B cell (primary cell): ENCODE measurements at regions of chr4 and their contacts with region 1.

Region 1: GRCh38 chr4:140790765-140791164 is 34.6 kb upstream of the TBC1D9 start:
- DNase-seq: peak; percentile 93
- ATAC-seq: peak; percentile 92
- H3K4me3 ChIP-seq: peak overlapping the region in 1 of 5 experiments; percentile 31
- H3K4me3 Mint-ChIP-seq: peak overlapping the region; percentile 67
- H3K27ac ChIP-seq: peak overlapping the region; percentile 72 to 82
- H3K27ac Mint-ChIP-seq: peak overlapping the region; percentile 88
- H3K4me1 ChIP-seq: peaks cover 63 to 67% of the 10 kb centered on the region in 2 donors
- H3K4me1 Mint-ChIP-seq: peaks cover 69% of the 10 kb centered on the region
- H3K27me3 ChIP-seq: no peaks in the 10 kb centered on the region
- H3K27me3 Mint-ChIP-seq: no peaks in the 10 kb centered on the region
- CTCF ChIP-seq: no peak

Region 2: DNA sequence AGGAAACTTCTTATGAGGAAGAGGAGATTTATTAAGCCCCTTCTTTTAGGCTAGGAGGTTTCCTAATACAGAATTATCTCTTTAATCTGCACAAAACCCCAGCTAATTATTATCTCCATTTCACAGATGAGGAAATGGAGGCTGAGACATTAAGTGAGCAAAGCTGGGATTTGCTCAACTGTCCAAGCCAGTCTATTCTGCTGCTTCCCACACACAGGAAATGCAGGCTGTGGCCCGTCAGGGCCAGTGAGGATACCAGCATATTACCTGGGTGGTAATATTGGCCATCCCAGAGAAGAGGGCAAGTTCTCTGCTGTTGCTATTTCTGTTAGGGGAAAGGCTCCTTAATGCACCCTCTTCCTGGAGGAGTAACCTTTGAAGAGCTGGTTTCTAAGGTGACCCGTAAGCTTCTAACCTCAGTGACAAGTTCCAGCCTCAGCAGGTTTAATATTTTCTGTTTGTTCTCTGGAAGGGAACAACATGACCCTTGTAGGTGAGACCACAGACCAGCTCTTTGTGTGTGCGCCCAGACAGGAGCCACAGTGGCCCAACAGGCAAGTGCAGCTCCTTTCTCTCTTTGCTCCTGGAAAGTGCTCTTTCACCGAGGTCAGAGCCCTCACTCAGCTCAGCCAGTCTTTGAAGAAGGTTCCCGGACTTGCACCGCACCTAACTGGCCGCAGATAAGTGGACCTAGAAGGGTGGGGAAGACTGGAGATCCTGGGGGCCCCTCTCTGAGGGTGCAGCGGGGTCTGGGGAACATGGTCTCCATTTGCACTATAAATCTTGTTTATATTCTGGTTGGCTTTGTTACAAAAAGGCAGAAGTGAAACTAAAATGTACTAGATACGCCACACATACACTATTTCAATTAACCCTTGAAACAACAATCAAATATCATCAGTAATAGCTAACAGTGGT is 70.1 kb before region 1 on chr4:
- CTCF ChIA-PET with region 1: interaction called, 4 read pairs
- POLR2A ChIA-PET with region 1: interaction called, 8 read pairs
- intact Hi-C with region 1: loop called (anchors 5 kb)
- DNase-seq: peak; percentile 75
- ATAC-seq: peak; percentile 63
- H3K4me3 ChIP-seq: peak overlapping the region; percentile 40 to 68 (median 54)
- H3K4me3 Mint-ChIP-seq: peak overlapping the region; percentile 89
- H3K27ac ChIP-seq: peak overlapping the region; percentile 92
- H3K27ac Mint-ChIP-seq: peak overlapping the region; percentile 99
- H3K4me1 ChIP-seq: peaks cover 75 to 76% of the 10 kb centered on the region in 2 donors
- H3K4me1 Mint-ChIP-seq: peaks cover 85% of the 10 kb centered on the region
- H3K27me3 ChIP-seq: no peaks in the 10 kb centered on the region
- H3K27me3 Mint-ChIP-seq: no peaks in the 10 kb centered on the region
- CTCF ChIP-seq: no peak

Region 3: GRCh38 chr4:140774510-140774909 is 16.3 kb before region 1 on chr4:
- CTCF ChIA-PET with region 1: interaction called, 3 read pairs
- POLR2A ChIA-PET with region 1: no interaction called
- intact Hi-C with region 1: loop called (anchors 2 kb)
- DNase-seq: no peak
- ATAC-seq: peak; percentile 28
- H3K4me3 ChIP-seq: no peak overlapping the region
- H3K4me3 Mint-ChIP-seq: peak overlapping the region; percentile 8
- H3K27ac ChIP-seq: peak overlapping the region in 1 of 2 donors; percentile 35
- H3K27ac Mint-ChIP-seq: peak overlapping the region; percentile 34
- H3K4me1 ChIP-seq: peaks cover 16 to 17% of the 10 kb centered on the region in 2 donors
- H3K4me1 Mint-ChIP-seq: peaks cover 40% of the 10 kb centered on the region
- H3K27me3 ChIP-seq: no peaks in the 10 kb centered on the region
- H3K27me3 Mint-ChIP-seq: no peaks in the 10 kb centered on the region
- CTCF ChIP-seq: no peak

Region 4: DNA sequence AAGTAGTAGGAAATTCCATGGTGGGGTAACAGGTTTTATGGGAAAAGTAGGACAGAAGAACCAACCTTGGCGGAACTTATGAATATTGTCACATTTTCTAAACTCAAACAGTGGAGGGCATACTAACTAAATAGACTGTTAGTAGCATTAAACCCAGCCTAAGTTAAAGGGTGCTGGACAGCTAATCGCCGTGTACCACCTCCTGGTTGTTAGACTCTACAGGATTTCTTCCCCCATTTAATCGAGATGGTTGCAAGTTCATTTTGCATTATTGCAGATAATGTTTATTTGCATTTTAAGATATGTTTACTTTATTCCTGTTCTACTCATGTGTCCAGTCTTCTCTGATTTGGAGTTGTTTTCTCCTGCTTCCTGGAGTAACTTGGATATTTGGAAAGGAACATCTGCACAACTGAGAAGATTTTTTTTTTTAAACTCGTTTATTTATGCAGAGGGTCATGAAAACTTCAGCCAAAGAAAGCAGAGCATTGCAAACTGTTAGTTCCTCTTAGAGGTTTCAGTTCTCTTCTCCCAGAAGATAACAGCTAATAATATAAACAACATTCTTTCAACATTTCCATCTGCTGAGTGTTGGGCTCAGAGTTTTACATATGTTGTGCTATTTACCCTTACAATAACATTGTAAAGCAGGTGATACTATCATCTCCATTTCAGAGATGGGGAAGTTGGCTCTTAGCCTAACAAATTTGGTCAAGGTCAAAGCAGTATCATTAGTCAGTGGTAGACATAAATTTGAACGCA is 16.9 kb after region 1 on chr4:
- CTCF ChIA-PET with region 1: interaction called, 14 read pairs
- POLR2A ChIA-PET with region 1: interaction called, 26 read pairs
- intact Hi-C with region 1: loop called (anchors 1 kb)
- DNase-seq: peak; percentile 80
- ATAC-seq: peak; percentile 84
- H3K4me3 ChIP-seq: peak overlapping the region in 2 of 5 experiments; percentile 10 to 50
- H3K4me3 Mint-ChIP-seq: peak overlapping the region; percentile 70
- H3K27ac ChIP-seq: peak overlapping the region; percentile 82 to 83
- H3K27ac Mint-ChIP-seq: peak overlapping the region; percentile 97
- H3K4me1 ChIP-seq: peaks cover 85 to 92% of the 10 kb centered on the region in 2 donors
- H3K4me1 Mint-ChIP-seq: peaks cover 83% of the 10 kb centered on the region
- H3K27me3 ChIP-seq: no peaks in the 10 kb centered on the region
- H3K27me3 Mint-ChIP-seq: no peaks in the 10 kb centered on the region
- CTCF ChIP-seq: no peak